GM18951 (cell line): ENCODE measurements at regions of chr22 and their contacts with region 1.

Region 1: GRCh38 chr22:39013942-39014722 is at the start of gene APOBEC3C:
- POLR2A ChIP-seq: peak; percentile 73

Region 2: DNA sequence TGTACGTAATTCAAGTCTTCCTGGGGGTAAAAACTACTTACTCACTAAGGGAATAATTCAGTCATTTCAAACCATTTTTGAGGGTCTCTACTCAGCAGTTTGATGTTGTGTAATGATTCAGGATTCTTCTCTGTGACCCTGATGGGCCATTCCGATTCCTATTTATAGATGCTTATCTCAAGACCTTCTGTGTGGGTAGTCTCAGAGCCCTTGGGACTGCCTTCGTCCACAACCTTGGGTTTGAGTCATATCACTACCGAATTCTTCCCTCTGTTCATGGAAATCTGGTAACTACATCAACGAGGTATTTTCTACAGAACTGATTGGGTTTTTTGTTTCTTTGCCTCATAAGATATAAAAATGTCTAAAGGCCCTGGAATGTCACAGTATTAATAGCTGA is 127.8 kb before region 1 on chr22:
- in situ Hi-C with region 1: no loop called
- POLR2A ChIP-seq: no peak

Region 3: GRCh38 chr22:39123751-39124601 is 109.8 kb after region 1 on chr22:
- in situ Hi-C with region 1: loop called (anchors 5 kb)
- POLR2A ChIP-seq: no peak